ENCODE measurements at regions of chr2 and their contacts with region 1.

Region 1: GRCh38 chr2:95345566-95346230 is 48.6 kb downstream of the KCNIP3 start:
- DNase-seq: peak; percentile 90
- ATAC-seq: peak; percentile 94 to 95

Region 2: GRCh38 chr2:94964193-94964592 is 381.5 kb before region 1 on chr2:
- intact Hi-C with region 1: no loop called
- DNase-seq: no peak
- ATAC-seq: no peak

Region 3: DNA sequence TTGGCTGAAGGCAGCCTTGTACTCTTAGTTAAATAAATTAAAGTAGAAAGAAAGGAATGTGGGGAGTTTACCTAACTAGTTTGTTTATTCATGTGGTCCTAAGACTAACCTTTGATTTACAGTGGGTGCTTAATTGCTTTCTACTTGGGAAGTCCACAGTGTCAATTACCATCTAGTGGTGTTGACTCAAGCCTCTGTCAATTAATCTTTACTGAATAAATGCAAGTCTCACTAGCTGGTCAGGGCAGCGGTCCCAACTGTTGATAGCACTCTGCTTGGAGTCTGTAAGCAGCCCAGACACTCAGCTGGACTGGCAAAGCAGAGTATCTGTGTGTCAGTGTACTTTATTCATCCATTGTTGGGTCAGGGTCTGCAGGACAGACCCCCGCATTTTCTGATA is 201.9 kb before region 1 on chr2:
- intact Hi-C with region 1: no loop called
- DNase-seq: no peak
- ATAC-seq: no peak

Region 4: GRCh38 chr2:95728878-95729596 is 383.3 kb after region 1 on chr2:
- intact Hi-C with region 1: loop called in 1 of 2 experiments (anchors 10 kb)
- DNase-seq: peak; percentile 61
- ATAC-seq: peak; percentile 96 to 97